Activated CD4-positive, alpha-beta memory T cell treated with anti-CD3 and anti-CD28 coated beads, Interleukin-2, amount 10 ng/mL, durations not matched to agents 7 days and 5 days (primary cell): ENCODE measurements at regions of chr17 and their contacts with region 1.

Region 1: GRCh38 chr17:35540589-35541404 is 3.3 kb upstream of the SLFN12L start:
- DNase-seq: peak; percentile 69
- H3K4me3 Mint-ChIP-seq: peak overlapping the region; percentile 86
- H3K27ac Mint-ChIP-seq: peak overlapping the region; percentile 100
- H3K4me1 Mint-ChIP-seq: peaks cover 53% of the 10 kb centered on the region
- H3K27me3 Mint-ChIP-seq: no peaks in the 10 kb centered on the region

Region 2: GRCh38 chr17:35170968-35171771 is 369.6 kb before region 1 on chr17:
- CTCF ChIA-PET with region 1: interaction called, 5 read pairs
- POLR2A ChIA-PET with region 1: interaction called, 16 read pairs
- DNase-seq: no peak
- H3K4me3 Mint-ChIP-seq: no peak overlapping the region
- H3K27ac Mint-ChIP-seq: peak overlapping the region; percentile 26
- H3K4me1 Mint-ChIP-seq: peaks cover 23% of the 10 kb centered on the region
- H3K27me3 Mint-ChIP-seq: no peaks in the 10 kb centered on the region

Region 3: GRCh38 chr17:35345926-35346771 is 194.6 kb before region 1 on chr17:
- CTCF ChIA-PET with region 1: interaction called, 3 read pairs
- POLR2A ChIA-PET with region 1: interaction called, 27 read pairs
- DNase-seq: peak; percentile 46
- H3K4me3 Mint-ChIP-seq: peak overlapping the region; percentile 81
- H3K27ac Mint-ChIP-seq: peak overlapping the region; percentile 80
- H3K4me1 Mint-ChIP-seq: peaks cover 68% of the 10 kb centered on the region
- H3K27me3 Mint-ChIP-seq: peaks cover 8% of the 10 kb centered on the region

Region 4: GRCh38 chr17:35486920-35487732 is 53.7 kb before region 1 on chr17:
- CTCF ChIA-PET with region 1: interaction called, 16 read pairs
- POLR2A ChIA-PET with region 1: interaction called, 55 read pairs
- DNase-seq: peak; percentile 76
- H3K4me3 Mint-ChIP-seq: peak overlapping the region; percentile 81
- H3K27ac Mint-ChIP-seq: peak overlapping the region; percentile 85
- H3K4me1 Mint-ChIP-seq: peaks cover 65% of the 10 kb centered on the region
- H3K27me3 Mint-ChIP-seq: no peaks in the 10 kb centered on the region

Region 5: GRCh38 chr17:35568541-35568940 is 27.7 kb after region 1 on chr17:
- CTCF ChIA-PET with region 1: no interaction called
- POLR2A ChIA-PET with region 1: interaction called, 15 read pairs
- DNase-seq: peak; percentile 39
- H3K4me3 Mint-ChIP-seq: peak overlapping the region; percentile 76
- H3K27ac Mint-ChIP-seq: peak overlapping the region; percentile 78
- H3K4me1 Mint-ChIP-seq: peaks cover 28% of the 10 kb centered on the region
- H3K27me3 Mint-ChIP-seq: peaks cover 11% of the 10 kb centered on the region

Region 6: DNA sequence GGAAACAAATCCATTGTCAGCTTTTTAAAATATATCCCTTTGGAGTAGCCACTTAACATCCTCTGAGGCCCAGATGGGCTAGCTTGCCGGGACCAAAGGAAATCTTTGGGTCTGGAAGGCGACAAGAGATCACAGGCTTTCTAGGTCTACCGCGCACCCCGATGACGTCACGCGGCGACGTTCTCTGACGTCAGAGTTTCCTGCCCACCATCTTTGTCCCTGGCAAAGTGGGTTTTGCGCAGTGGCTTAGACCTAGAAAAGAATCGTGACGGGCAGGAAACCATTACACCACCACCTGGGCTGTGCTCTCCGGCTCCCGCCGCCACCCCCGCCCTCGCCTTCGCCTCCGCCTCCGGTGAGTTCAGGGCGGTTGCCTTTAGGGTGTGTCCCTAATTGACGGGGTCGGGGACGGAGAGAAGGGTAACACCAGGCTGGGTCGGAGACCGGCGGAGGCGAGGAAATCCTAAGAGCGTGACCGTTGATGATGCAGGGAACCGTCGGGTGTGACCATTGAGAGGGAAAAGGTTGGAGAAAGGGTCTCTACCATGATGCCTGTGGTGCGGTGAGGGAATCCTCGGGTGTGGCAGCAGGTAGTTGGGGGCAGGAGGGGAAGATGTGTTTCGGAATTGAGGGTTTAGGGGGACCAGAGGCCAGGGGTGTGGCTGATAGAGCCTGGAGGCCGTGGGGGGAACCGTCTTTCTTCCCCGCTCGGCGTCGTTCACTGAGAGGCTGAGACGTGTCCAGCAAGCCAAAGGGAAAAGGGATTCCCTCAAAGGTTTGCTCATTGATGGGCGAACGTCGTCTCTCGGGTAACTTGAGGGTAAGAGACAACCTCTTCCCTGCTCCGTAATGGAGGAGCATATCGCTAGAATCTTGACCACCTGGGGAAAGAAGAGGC is 46.5 kb after region 1 on chr17 and contains the start of gene AP2B1:
- CTCF ChIA-PET with region 1: no interaction called
- POLR2A ChIA-PET with region 1: interaction called, 103 read pairs
- DNase-seq: peak; percentile 98
- H3K4me3 Mint-ChIP-seq: peak within 1 kb of the TSS; percentile 96
- H3K27ac Mint-ChIP-seq: peak within 1 kb of the TSS; percentile 97
- H3K4me1 Mint-ChIP-seq: peaks cover 38% of the 10 kb centered on the region
- H3K27me3 Mint-ChIP-seq: peaks cover 11% of the 10 kb centered on the region
- total RNA-seq, gene AP2B1: 196 to 203 TPM